ENCODE measurements at regions of chr7 and their contacts with region 1.

Region 1: GRCh38 chr7:30983042-30983913 is 19.5 kb downstream of the GHRHR start:
- DNase-seq: peak; percentile 75 to 77
- ATAC-seq: peak; percentile 90 to 97
- H3K4me3 ChIP-seq: no peak overlapping the region
- H3K27ac ChIP-seq: no peak overlapping the region
- H3K4me1 ChIP-seq: peaks cover 3% of the 10 kb centered on the region; the same call in 2 of the 3 replicates
- CTCF ChIP-seq: peak; percentile 87
- EP300 ChIP-seq: no peak
- POLR2A ChIP-seq: no peak
- RAD21 ChIP-seq: peak; percentile 90

Region 2: DNA sequence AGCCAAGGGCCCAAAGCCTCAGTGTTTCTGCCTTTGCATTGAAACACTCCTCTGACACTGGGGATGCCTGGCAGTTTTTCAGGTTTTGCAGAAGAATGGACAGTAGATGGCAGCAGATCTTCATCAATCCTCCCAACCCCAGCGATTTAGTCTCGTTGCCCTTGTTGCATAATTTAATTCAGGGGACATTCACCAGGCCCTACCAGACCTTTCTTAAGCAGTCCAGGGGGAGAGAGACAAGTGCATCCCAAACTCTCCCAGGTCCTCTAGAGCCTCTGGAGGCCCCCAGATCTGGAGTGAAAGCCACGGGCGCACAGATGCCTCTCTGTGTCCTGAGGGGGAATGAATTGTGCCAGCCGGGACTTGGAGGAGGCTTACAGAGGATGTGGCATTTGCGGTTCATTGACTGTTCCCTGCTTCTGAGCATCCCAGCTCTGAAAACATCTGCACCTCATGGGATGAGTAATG is 182.5 kb before region 1 on chr7:
- CTCF ChIA-PET with region 1: interaction called, 28 read pairs
- POLR2A ChIA-PET with region 1: no interaction called
- DNase-seq: peak; percentile 58 to 79
- ATAC-seq: peak; percentile 81 to 91; a peak in 5 of 6 replicates
- H3K4me3 ChIP-seq: no peak overlapping the region
- H3K27ac ChIP-seq: no peak overlapping the region
- H3K4me1 ChIP-seq: peaks cover 19% of the 10 kb centered on the region
- CTCF ChIP-seq: peak; percentile 84
- EP300 ChIP-seq: no peak
- POLR2A ChIP-seq: no peak
- RAD21 ChIP-seq: peak; percentile 87 to 90

Region 3: GRCh38 chr7:30968294-30968693 is 15.0 kb before region 1 on chr7:
- CTCF ChIA-PET with region 1: interaction called, 46 read pairs
- POLR2A ChIA-PET with region 1: no interaction called
- DNase-seq: no peak
- ATAC-seq: no peak
- H3K4me3 ChIP-seq: no peak overlapping the region
- H3K27ac ChIP-seq: no peak overlapping the region
- H3K4me1 ChIP-seq: no peaks in the 10 kb centered on the region
- CTCF ChIP-seq: no peak
- EP300 ChIP-seq: no peak
- POLR2A ChIP-seq: no peak
- RAD21 ChIP-seq: no peak

Region 4: GRCh38 chr7:31100445-31100844 is 117.2 kb after region 1 on chr7:
- CTCF ChIA-PET with region 1: interaction called, 14 read pairs
- POLR2A ChIA-PET with region 1: no interaction called
- DNase-seq: no peak
- ATAC-seq: peak in 1 of 2 experiments; percentile 38; a peak in 2 of 6 replicates
- H3K4me3 ChIP-seq: no peak overlapping the region
- H3K27ac ChIP-seq: no peak overlapping the region
- H3K4me1 ChIP-seq: no peaks in the 10 kb centered on the region
- CTCF ChIP-seq: no peak
- EP300 ChIP-seq: no peak
- POLR2A ChIP-seq: no peak
- RAD21 ChIP-seq: no peak

Region 5: DNA sequence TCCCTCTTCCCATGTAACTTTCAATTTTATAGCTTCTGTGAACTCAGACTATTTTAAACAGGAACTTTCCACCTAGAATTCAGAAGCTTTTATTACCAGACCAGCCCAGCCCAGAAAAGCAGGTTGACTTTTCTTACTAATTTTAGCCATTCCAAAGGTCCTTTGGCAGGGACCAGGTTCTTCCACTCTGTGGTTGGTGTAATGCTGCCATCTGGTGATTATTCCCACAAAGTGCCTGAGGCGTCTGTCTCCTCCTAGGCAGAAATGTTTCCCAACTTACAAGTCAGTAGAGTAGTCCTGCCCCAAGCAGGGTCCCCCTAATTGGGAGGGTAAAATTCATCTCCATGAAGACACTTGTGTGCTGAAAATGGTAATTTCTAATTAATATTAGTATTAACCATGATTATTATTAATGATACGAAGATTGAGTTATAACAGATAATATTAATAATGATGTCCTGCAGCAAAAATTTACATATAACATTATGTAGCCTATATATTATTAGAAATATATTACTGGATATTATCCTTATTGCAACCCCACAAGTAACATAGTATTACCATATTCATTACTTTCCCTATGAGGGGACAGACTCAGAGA is 650.7 kb after region 1 on chr7:
- CTCF ChIA-PET with region 1: interaction called, 10 read pairs
- POLR2A ChIA-PET with region 1: no interaction called
- DNase-seq: peak; percentile 47 to 69
- ATAC-seq: peak; percentile 96
- H3K4me3 ChIP-seq: no peak overlapping the region
- H3K27ac ChIP-seq: no peak overlapping the region
- H3K4me1 ChIP-seq: no peaks in the 10 kb centered on the region
- CTCF ChIP-seq: peak; percentile 76
- EP300 ChIP-seq: no peak
- POLR2A ChIP-seq: no peak
- RAD21 ChIP-seq: peak; percentile 87 to 92

Measured in A549 (cell line).